ENCODE measurements at regions of chr14 and their contacts with region 1.

Region 1: DNA sequence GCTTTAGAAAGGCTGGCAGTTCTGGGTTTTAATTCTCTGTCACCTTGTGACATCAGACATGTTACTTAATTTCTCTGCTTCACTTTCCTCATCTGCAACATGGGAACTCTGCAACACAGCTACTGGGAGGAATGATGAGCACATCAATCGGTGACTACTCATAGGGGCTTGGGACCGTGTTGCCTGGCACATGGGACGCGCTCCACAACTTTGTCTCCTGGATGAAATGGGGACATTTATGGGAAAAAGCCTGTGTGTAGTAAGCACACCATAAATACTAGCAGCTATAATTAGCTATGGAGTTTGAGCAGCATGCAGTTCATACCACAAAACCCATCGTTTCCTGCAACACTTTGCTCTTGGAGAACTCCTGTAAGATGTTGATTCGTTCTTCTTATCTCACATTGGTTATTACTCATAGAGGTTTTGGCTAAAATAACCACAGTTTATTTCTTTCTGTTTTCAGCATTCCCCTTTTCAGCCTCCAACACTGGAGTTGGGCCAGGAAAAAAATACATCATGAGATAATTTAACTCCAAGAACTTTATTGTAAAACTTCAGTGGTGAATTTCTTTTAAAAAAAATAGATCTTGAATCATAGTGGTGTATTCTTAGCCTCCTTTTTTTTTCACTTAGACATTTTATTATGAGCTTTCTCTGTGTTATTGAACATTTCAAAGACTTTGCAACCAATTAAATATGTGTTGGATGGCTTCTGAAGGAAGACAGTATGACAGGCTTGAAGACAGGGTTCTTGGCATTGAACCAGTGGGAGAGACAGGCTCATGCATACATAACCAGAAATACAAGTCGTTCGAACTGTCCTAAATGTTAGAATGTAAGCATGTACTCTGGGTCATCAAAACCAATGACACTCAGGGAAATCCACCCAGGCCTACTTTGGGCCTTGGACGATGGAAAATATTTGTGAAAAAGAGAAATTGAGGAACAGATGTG is 72.7 kb downstream of the RIN3 start:
- DNase-seq: no peak
- ATAC-seq: no peak
- H3K4me3 Mint-ChIP-seq: peak overlapping the region; percentile 29
- H3K27ac Mint-ChIP-seq: no peak overlapping the region
- H3K4me1 Mint-ChIP-seq: peaks cover 79% of the 10 kb centered on the region
- H3K27me3 Mint-ChIP-seq: no peaks in the 10 kb centered on the region
- CTCF ChIP-seq: no peak

Region 2: GRCh38 chr14:92039719-92040430 is 546.4 kb before region 1 on chr14 and contains the start of gene TRIP11:
- CTCF ChIA-PET with region 1: no interaction called
- POLR2A ChIA-PET with region 1: no interaction called
- intact Hi-C with region 1: no loop called
- DNase-seq: peak; percentile 94
- ATAC-seq: peak; percentile 96
- H3K4me3 Mint-ChIP-seq: peak within 1 kb of the TSS; percentile 98
- H3K27ac Mint-ChIP-seq: peak within 1 kb of the TSS; percentile 95
- H3K4me1 Mint-ChIP-seq: peaks cover 40% of the 10 kb centered on the region
- H3K27me3 Mint-ChIP-seq: no peaks in the 10 kb centered on the region
- CTCF ChIP-seq: no peak
- total RNA-seq, gene TRIP11: 46.2 and 59.5 TPM in 2 replicates

Region 3: GRCh38 chr14:92551044-92551841 is 35.0 kb before region 1 on chr14:
- CTCF ChIA-PET with region 1: no interaction called
- POLR2A ChIA-PET with region 1: no interaction called
- intact Hi-C with region 1: loop called (anchors 2 kb)
- DNase-seq: no peak
- ATAC-seq: peak; percentile 78
- H3K4me3 Mint-ChIP-seq: peak overlapping the region; percentile 55
- H3K27ac Mint-ChIP-seq: no peak overlapping the region
- H3K4me1 Mint-ChIP-seq: peaks cover 44% of the 10 kb centered on the region
- H3K27me3 Mint-ChIP-seq: peaks cover 7% of the 10 kb centered on the region
- CTCF ChIP-seq: no peak

Region 4: GRCh38 chr14:92568621-92569479 is 17.4 kb before region 1 on chr14:
- CTCF ChIA-PET with region 1: interaction called, 8 read pairs
- POLR2A ChIA-PET with region 1: interaction called, 10 read pairs
- intact Hi-C with region 1: no loop called
- DNase-seq: peak; percentile 34
- ATAC-seq: peak; percentile 84
- H3K4me3 Mint-ChIP-seq: peak overlapping the region; percentile 67
- H3K27ac Mint-ChIP-seq: peak overlapping the region; percentile 95
- H3K4me1 Mint-ChIP-seq: peaks cover 36% of the 10 kb centered on the region
- H3K27me3 Mint-ChIP-seq: no peaks in the 10 kb centered on the region
- CTCF ChIP-seq: no peak

Region 5: GRCh38 chr14:92612988-92613658 is 26.9 kb after region 1 on chr14:
- CTCF ChIA-PET with region 1: interaction called, 5 read pairs
- POLR2A ChIA-PET with region 1: interaction called, 5 read pairs
- intact Hi-C with region 1: loop called (anchors 2 kb)
- DNase-seq: peak; percentile 58
- ATAC-seq: peak; percentile 8
- H3K4me3 Mint-ChIP-seq: peak overlapping the region; percentile 46
- H3K27ac Mint-ChIP-seq: peak overlapping the region; percentile 75
- H3K4me1 Mint-ChIP-seq: peaks cover 74% of the 10 kb centered on the region
- H3K27me3 Mint-ChIP-seq: no peaks in the 10 kb centered on the region
- CTCF ChIP-seq: no peak

Region 6: GRCh38 chr14:92651106-92651757 is 65.0 kb after region 1 on chr14:
- CTCF ChIA-PET with region 1: interaction called, 13 read pairs
- POLR2A ChIA-PET with region 1: interaction called, 9 read pairs
- intact Hi-C with region 1: loop called (anchors 2 kb)
- DNase-seq: peak; percentile 69
- ATAC-seq: peak; percentile 77
- H3K4me3 Mint-ChIP-seq: peak overlapping the region; percentile 98
- H3K27ac Mint-ChIP-seq: peak overlapping the region; percentile 95
- H3K4me1 Mint-ChIP-seq: peaks cover 76% of the 10 kb centered on the region
- H3K27me3 Mint-ChIP-seq: no peaks in the 10 kb centered on the region
- CTCF ChIP-seq: no peak

Region 7: DNA sequence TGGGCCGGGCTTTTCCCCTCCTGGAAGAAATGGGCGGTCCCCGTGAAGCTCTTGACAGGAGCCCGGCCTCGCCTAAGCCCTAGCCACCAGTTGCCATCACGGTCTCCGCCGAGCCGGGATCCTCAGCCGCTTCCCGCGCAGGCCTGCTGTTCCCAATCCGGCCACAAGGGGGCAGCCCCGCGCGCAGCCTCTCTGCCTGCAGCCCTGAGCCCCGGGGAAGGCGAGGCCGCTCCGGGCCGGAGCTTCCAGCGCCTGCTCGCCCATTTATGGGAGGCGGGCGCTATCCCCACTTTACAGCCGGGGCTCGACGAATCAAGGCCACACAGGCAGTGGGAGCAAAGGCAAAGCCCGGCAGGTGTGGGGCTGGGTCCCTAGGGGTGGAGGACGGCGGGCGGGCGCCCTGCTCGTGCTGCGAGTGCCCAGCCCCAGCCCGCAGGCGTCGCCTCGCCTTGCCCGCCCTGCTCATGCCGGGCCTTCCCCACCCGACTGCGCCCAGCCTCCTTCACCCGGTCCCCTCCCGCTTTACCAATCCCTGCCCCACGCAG is 100.7 kb after region 1 on chr14:
- CTCF ChIA-PET with region 1: interaction called, 61 read pairs
- POLR2A ChIA-PET with region 1: no interaction called
- intact Hi-C with region 1: no loop called
- DNase-seq: peak; percentile 83
- ATAC-seq: peak; percentile 90
- H3K4me3 Mint-ChIP-seq: no peak overlapping the region
- H3K27ac Mint-ChIP-seq: no peak overlapping the region
- H3K4me1 Mint-ChIP-seq: no peaks in the 10 kb centered on the region
- H3K27me3 Mint-ChIP-seq: no peaks in the 10 kb centered on the region
- CTCF ChIP-seq: peak; percentile 89

Region 8: DNA sequence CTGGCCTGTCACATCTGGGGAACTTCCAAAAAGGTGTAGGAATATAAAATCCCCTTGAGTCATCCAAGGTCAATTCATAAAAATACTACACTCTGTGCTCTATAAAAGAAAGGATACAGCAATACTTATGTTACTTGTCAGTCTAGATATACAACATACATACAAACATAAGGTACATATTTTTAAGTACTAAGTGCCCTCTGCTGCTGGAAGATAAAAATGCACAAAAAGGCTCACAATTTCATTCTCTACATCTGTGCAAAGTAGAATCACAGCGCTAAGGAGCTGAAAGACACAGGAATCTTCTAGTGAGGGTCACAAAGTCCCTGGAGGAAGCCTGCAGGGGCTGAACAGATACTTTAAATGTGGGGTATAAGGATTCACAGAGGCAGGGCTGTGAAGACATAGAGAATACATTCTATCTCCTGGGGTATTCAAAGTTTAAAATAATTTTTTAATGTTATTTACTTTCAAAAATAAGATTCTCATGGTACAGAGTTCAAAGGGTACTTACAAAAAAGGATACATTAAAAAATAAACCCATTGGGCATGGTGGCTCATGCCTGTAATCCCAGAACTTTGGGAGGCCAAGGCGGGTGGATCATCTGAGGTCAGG is 197.7 kb after region 1 on chr14:
- CTCF ChIA-PET with region 1: interaction called, 3 read pairs
- POLR2A ChIA-PET with region 1: no interaction called
- intact Hi-C with region 1: loop called (anchors 5 kb)
- DNase-seq: no peak
- ATAC-seq: peak; percentile 85
- H3K4me3 Mint-ChIP-seq: no peak overlapping the region
- H3K27ac Mint-ChIP-seq: no peak overlapping the region
- H3K4me1 Mint-ChIP-seq: peaks cover 13% of the 10 kb centered on the region
- H3K27me3 Mint-ChIP-seq: no peaks in the 10 kb centered on the region
- CTCF ChIP-seq: peak; percentile 34